Posterior vena cava (tissue), 2 donors: ENCODE measurements at regions of chr10 and their contacts with region 1.

Region 1: GRCh38 chr10:4283846-4284610 is 499.0 kb upstream of the KLF6 start:
- DNase-seq: peak; percentile 91

Region 2: DNA sequence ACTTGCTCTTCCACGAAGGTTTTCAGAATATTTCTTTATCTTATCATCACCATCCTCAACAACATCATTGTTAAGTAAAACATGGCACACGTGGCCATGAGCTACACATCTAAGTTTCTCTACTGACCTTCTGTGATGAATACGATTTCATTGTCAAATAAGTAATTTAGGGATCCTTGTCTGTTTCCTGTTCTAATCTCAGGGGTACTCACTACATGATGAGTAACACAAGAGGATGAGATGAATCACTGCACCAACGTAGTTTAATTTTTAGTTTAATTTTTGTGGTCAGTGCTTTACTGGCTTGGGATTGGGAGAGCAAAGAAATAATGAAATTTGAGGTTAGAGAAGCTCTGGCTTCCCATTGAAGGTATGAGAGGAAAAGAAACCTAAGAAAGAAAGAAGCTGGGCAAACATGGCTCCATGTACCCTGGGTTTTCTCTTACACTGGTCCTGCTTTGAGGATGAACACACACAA is 37.1 kb before region 1 on chr10:
- intact Hi-C with region 1: loop called in 1 of 2 experiments (anchors 5 kb)
- DNase-seq: no peak

Region 3: DNA sequence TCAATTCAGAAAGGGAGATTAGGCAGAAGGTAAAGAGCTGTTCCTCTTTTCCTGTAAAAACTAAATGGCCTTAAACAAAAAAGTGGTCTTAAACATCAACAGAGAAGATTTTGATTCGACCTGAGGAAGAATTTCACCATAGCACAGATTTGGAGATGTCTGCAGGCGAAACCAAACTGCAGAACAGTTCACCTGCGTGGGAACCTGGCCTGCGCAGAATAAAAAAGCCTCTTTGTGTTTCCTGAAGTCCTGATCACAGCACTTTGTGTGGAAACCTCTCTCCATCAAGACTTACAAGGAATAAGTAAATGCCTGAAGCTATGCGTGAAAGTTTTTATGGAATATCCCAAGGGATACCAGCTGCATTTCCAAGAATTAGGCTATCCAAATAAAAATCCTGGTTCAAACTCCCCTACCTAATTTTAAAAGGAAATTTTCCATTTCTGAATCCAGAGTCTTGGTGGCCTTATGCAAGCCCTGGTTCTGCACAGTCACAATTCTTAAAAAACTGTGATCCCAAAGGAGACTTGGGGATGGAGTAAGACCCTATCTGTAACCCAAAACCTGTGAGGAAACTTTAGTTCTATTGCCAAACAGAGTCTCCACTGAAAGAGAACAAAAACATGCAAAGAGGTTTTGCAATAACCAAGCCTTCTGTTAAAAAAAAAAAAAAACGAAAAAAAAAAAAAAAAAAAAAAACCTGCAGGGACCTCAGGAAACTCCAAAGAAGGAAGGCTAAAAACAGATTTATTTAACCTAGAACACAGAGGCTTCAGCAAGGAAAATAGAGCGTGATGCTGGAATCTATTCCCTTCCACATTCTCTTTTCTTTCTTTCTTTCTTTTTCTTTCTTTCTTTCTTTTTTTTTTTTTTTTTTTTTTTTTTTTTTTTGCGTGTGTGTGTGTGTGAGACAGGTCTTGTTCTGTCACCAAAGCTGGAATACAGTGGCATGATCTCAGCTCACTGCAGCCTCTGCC is 1251.1 kb after region 1 on chr10:
- intact Hi-C with region 1: loop called in 1 of 2 experiments (anchors 5 kb)
- DNase-seq: no peak